CD8-positive, alpha-beta T cell (primary cell): ENCODE measurements at regions of chr2 and their contacts with region 1.

Region 1: DNA sequence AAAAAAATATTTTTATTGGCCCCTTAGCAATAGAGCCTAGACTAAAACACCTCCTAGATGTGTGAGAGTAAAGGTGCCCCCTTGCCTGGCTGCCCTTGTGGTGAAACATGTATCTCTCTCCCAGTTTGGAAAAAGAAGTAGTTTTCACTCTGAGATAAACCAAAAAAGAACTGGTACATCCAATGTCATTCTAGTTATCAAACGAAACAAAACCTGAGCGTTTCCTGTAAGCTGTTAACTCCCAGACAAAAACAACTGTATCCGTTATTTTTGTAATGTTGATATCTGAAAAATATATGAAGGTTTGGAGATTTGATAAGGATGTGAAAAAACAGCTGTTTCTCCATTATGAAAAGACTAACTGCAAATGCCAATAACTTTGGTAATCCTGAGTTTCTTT is 24.3 kb downstream of the HEATR5B start:
- DNase-seq: no peak
- ATAC-seq: no peak
- H3K4me3 ChIP-seq: no peak overlapping the region
- H3K4me3 Mint-ChIP-seq: no peak overlapping the region
- H3K27ac ChIP-seq: no peak overlapping the region
- H3K27ac Mint-ChIP-seq: no peak overlapping the region
- H3K4me1 ChIP-seq: no peaks in the 10 kb centered on the region
- H3K4me1 Mint-ChIP-seq: no peaks in the 10 kb centered on the region
- H3K27me3 ChIP-seq: no peaks in the 10 kb centered on the region
- H3K27me3 Mint-ChIP-seq: no peaks in the 10 kb centered on the region
- CTCF ChIP-seq: no peak

Region 2: GRCh38 chr2:37096568-37096967 is 36.7 kb after region 1 on chr2:
- CTCF ChIA-PET with region 1: no interaction called
- POLR2A ChIA-PET with region 1: no interaction called
- intact Hi-C with region 1: loop called in 1 of 2 experiments (anchors 5 kb)
- DNase-seq: no peak
- ATAC-seq: no peak
- H3K4me3 ChIP-seq: no peak overlapping the region
- H3K4me3 Mint-ChIP-seq: no peak overlapping the region
- H3K27ac ChIP-seq: no peak overlapping the region
- H3K27ac Mint-ChIP-seq: no peak overlapping the region
- H3K4me1 ChIP-seq: no peaks in the 10 kb centered on the region
- H3K4me1 Mint-ChIP-seq: peaks cover 2% of the 10 kb centered on the region
- H3K27me3 ChIP-seq: no peaks in the 10 kb centered on the region
- H3K27me3 Mint-ChIP-seq: no peaks in the 10 kb centered on the region
- CTCF ChIP-seq: no peak